B cell (primary cell): ENCODE measurements at regions of chr1 and their contacts with region 1.

Region 1: DNA sequence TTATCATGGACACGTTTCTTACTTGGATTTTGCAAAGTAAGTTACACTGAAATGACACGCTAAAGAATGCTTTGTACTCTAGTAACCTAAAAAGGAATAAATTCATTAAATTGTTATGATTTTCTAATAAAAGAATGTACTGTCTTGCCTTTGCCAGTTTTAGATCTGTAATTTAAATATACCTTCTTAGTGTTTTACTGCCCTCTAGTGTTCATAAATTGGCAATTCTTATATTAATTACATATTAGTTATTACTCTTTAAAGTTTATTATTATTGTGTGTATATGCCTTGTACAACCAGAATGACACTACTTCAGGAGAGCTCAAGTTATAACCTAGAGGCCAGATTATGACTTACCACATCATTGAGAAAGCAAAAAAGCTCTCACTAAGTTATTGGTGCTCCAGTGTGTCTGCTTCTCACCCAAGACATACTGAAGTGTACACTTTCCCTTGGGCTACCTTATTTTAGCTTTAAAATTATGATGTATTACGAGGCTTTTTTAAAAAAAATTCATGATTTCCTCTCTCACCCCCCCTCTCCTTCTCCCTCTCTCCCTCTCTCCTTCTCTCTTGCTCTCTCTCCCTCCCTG is 169.9 kb downstream of the HS2ST1 start:
- DNase-seq: peak; percentile 65
- ATAC-seq: no peak
- H3K4me3 ChIP-seq: no peak overlapping the region
- H3K4me3 Mint-ChIP-seq: no peak overlapping the region
- H3K27ac ChIP-seq: no peak overlapping the region
- H3K27ac Mint-ChIP-seq: no peak overlapping the region
- H3K4me1 ChIP-seq: peaks cover 0 to 4% of the 10 kb centered on the region in 2 donors
- H3K4me1 Mint-ChIP-seq: peaks cover 14% of the 10 kb centered on the region
- H3K27me3 ChIP-seq: no peaks in the 10 kb centered on the region
- H3K27me3 Mint-ChIP-seq: no peaks in the 10 kb centered on the region
- CTCF ChIP-seq: peak; percentile 88

Region 2: DNA sequence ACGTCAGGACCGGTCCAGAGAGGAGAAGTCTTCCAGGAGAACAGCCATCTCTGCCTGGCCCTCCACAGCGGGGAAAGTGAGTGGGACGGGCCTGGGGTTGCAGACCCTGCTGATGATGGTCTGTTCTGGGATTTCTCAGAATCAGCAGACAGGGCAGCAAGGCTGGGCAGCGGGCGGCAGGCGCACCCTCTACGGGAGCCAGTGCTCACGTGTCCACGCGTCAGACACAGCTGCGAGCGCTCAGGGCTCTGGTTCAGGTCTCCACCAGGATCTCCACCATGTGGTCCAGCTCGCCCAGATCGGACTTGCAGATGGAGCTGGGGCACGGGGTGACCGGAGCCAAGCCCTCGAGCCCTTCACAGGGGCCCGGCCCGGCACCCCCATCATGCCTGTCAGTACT is 532.0 kb before region 1 on chr1:
- CTCF ChIA-PET with region 1: no interaction called
- POLR2A ChIA-PET with region 1: no interaction called
- intact Hi-C with region 1: no loop called
- DNase-seq: no peak
- ATAC-seq: no peak
- H3K4me3 ChIP-seq: no peak overlapping the region
- H3K4me3 Mint-ChIP-seq: no peak overlapping the region
- H3K27ac ChIP-seq: no peak overlapping the region
- H3K27ac Mint-ChIP-seq: no peak overlapping the region
- H3K4me1 ChIP-seq: no peaks in the 10 kb centered on the region
- H3K4me1 Mint-ChIP-seq: peaks cover 4% of the 10 kb centered on the region
- H3K27me3 ChIP-seq: no peaks in the 10 kb centered on the region
- H3K27me3 Mint-ChIP-seq: no peaks in the 10 kb centered on the region
- CTCF ChIP-seq: no peak

Region 3: DNA sequence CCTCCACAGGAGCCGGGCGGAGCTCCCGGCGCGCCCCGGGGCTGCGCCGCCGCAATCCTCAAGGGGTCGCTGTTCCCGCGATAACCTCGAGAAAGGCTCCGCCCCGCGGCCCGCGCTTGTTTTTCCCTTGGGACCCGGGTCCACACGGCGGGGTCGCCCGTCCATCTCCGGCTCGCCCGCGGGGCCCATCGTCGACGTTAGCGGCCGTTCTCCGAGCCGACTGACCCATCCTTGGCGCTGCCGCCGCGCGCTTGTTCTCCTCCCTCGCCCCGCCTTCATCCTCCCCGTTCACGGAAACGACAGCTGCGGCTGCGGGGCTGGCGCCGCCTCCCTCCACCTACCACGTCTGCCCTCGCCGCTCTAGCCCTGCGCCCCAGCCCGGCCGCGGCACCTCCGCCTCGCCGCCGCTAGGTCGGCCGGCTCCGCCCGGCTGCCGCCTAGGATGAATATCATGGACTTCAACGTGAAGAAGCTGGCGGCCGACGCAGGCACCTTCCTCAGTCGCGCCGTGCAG is 379.8 kb before region 1 on chr1 and contains the start of gene SH3GLB1:
- CTCF ChIA-PET with region 1: interaction called, 10 read pairs
- POLR2A ChIA-PET with region 1: no interaction called
- intact Hi-C with region 1: loop called (anchors 10 kb)
- DNase-seq: peak; percentile 97
- ATAC-seq: peak; percentile 85
- H3K4me3 ChIP-seq: peak within 1 kb of the TSS; percentile 79 to 90 (median 82)
- H3K4me3 Mint-ChIP-seq: peak within 1 kb of the TSS; percentile 98
- H3K27ac ChIP-seq: peak within 1 kb of the TSS; percentile 78 to 93
- H3K27ac Mint-ChIP-seq: peak within 1 kb of the TSS; percentile 100
- H3K4me1 ChIP-seq: peaks cover 24 to 30% of the 10 kb centered on the region in 2 donors
- H3K4me1 Mint-ChIP-seq: peaks cover 44% of the 10 kb centered on the region
- H3K27me3 ChIP-seq: no peaks in the 10 kb centered on the region
- H3K27me3 Mint-ChIP-seq: no peaks in the 10 kb centered on the region
- CTCF ChIP-seq: peak; percentile 91
- total RNA-seq, gene SH3GLB1: 55.3 and 57.3 TPM in 2 replicates

Region 4: GRCh38 chr1:86833461-86834215 is 250.7 kb before region 1 on chr1:
- CTCF ChIA-PET with region 1: interaction called, 273 read pairs
- POLR2A ChIA-PET with region 1: no interaction called
- intact Hi-C with region 1: loop called (anchors 1 kb)
- DNase-seq: peak; percentile 81
- ATAC-seq: peak; percentile 70
- H3K4me3 ChIP-seq: no peak overlapping the region
- H3K4me3 Mint-ChIP-seq: no peak overlapping the region
- H3K27ac ChIP-seq: no peak overlapping the region
- H3K27ac Mint-ChIP-seq: no peak overlapping the region
- H3K4me1 ChIP-seq: peaks cover 0 to 5% of the 10 kb centered on the region in 2 donors
- H3K4me1 Mint-ChIP-seq: peaks cover 5% of the 10 kb centered on the region
- H3K27me3 ChIP-seq: no peaks in the 10 kb centered on the region
- H3K27me3 Mint-ChIP-seq: no peaks in the 10 kb centered on the region
- CTCF ChIP-seq: peak; percentile 76

Region 5: GRCh38 chr1:86965012-86965826 is 119.1 kb before region 1 on chr1:
- CTCF ChIA-PET with region 1: interaction called, 66 read pairs
- POLR2A ChIA-PET with region 1: no interaction called
- intact Hi-C with region 1: loop called (anchors 1 kb)
- DNase-seq: peak; percentile 48
- ATAC-seq: peak; percentile 28
- H3K4me3 ChIP-seq: no peak overlapping the region
- H3K4me3 Mint-ChIP-seq: no peak overlapping the region
- H3K27ac ChIP-seq: no peak overlapping the region
- H3K27ac Mint-ChIP-seq: peak overlapping the region; percentile 59
- H3K4me1 ChIP-seq: peaks cover 0 to 9% of the 10 kb centered on the region in 2 donors
- H3K4me1 Mint-ChIP-seq: peaks cover 19% of the 10 kb centered on the region
- H3K27me3 ChIP-seq: no peaks in the 10 kb centered on the region
- H3K27me3 Mint-ChIP-seq: no peaks in the 10 kb centered on the region
- CTCF ChIP-seq: peak; percentile 60

Region 6: DNA sequence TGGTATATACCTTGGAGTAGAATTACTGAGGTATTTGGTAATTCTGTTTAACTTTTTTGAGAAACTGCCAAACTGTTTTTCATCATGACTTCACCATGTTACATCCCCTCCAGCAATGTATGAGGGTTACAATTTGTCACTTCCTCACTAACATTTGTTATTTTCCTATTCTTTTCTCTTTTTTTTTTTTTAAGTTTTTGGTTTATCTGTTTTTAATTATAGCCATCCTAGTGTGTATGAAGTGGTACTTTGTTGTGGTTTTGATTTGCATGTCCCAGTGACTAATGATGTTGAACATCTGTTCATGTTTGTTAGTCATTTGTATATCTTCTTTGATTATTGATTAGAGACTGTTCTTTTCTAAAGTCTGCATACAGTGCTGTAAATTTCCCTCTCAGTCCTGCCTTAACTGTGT is 22.6 kb before region 1 on chr1:
- CTCF ChIA-PET with region 1: interaction called, 33 read pairs
- POLR2A ChIA-PET with region 1: no interaction called
- intact Hi-C with region 1: no loop called
- DNase-seq: peak; percentile 57
- ATAC-seq: peak; percentile 35
- H3K4me3 ChIP-seq: no peak overlapping the region
- H3K4me3 Mint-ChIP-seq: peak overlapping the region; percentile 68
- H3K27ac ChIP-seq: peak overlapping the region; percentile 59 to 73
- H3K27ac Mint-ChIP-seq: peak overlapping the region; percentile 79
- H3K4me1 ChIP-seq: peaks cover 49 to 81% of the 10 kb centered on the region in 2 donors
- H3K4me1 Mint-ChIP-seq: peaks cover 80% of the 10 kb centered on the region
- H3K27me3 ChIP-seq: no peaks in the 10 kb centered on the region
- H3K27me3 Mint-ChIP-seq: no peaks in the 10 kb centered on the region
- CTCF ChIP-seq: no peak

Region 7: DNA sequence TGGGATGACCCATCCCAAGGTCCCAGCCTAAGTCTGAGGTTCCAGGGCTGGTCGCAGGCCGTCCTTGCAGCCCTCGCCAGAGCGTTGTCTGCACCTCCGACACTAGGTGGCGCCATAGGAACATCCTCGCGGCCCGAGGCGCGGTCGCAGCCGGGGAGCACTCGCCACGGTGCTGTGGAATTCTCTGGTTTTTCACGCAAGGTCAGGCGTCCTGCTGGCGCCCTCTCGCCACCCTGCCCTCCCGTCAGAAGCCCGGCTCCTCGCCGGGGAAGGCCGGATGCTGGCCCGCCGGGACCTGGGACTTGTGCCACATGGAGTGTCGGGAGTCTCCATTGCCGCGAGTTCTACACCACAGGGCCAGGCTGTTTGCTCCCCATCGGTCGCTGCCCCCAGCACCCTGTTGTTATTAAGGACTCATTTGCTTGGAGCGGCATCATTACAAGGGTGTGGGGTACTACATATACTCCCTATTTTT is 47.5 kb after region 1 on chr1:
- CTCF ChIA-PET with region 1: interaction called, 10 read pairs
- POLR2A ChIA-PET with region 1: no interaction called
- intact Hi-C with region 1: no loop called
- DNase-seq: peak; percentile 82
- ATAC-seq: peak; percentile 96
- H3K4me3 ChIP-seq: peak overlapping the region; percentile 13 to 75 (median 63)
- H3K4me3 Mint-ChIP-seq: peak overlapping the region; percentile 94
- H3K27ac ChIP-seq: peak overlapping the region in 1 of 2 donors; percentile 21
- H3K27ac Mint-ChIP-seq: peak overlapping the region; percentile 56
- H3K4me1 ChIP-seq: peaks cover 6 to 11% of the 10 kb centered on the region in 2 donors
- H3K4me1 Mint-ChIP-seq: peaks cover 11% of the 10 kb centered on the region
- H3K27me3 ChIP-seq: peaks cover 0 to 33% (median 5%) of the 10 kb centered on the region in 4 experiments
- H3K27me3 Mint-ChIP-seq: peaks cover 28% of the 10 kb centered on the region
- CTCF ChIP-seq: peak; percentile 98